ENCODE measurements at regions of chr2 and their contacts with region 1.

Region 1: GRCh38 chr2:46230115-46230571 is 67.1 kb upstream of the EPAS1 start:
- DNase-seq: peak; percentile 24
- ATAC-seq: peak; percentile 76
- H3K4me3 ChIP-seq: peak overlapping the region in 2 of 3 experiments; percentile 23 to 53; a peak in 4 of 6 replicates
- H3K27ac ChIP-seq: no peak overlapping the region
- H3K4me1 ChIP-seq: peaks cover 68% of the 10 kb centered on the region
- H3K27me3 ChIP-seq: peaks cover 0 to 6% of the 10 kb centered on the region in 2 experiments; a peak in 3 of 5 replicates
- CTCF ChIP-seq: peak; percentile 73
- EP300 ChIP-seq: no peak
- POLR2A ChIP-seq: no peak
- RAD21 ChIP-seq: peak; percentile 51

Region 2: GRCh38 chr2:45412754-45413379 is 817.3 kb before region 1 on chr2:
- CTCF ChIA-PET with region 1: no interaction called
- POLR2A ChIA-PET with region 1: no interaction called
- in situ Hi-C with region 1: no loop called
- intact Hi-C with region 1: no loop called
- DNase-seq: no peak
- ATAC-seq: no peak
- H3K4me3 ChIP-seq: no peak overlapping the region
- H3K27ac ChIP-seq: no peak overlapping the region
- H3K4me1 ChIP-seq: no peaks in the 10 kb centered on the region
- H3K27me3 ChIP-seq: no peaks in the 10 kb centered on the region
- CTCF ChIP-seq: no peak
- EP300 ChIP-seq: no peak
- POLR2A ChIP-seq: no peak
- RAD21 ChIP-seq: no peak

Region 3: GRCh38 chr2:46062637-46063412 is 167.3 kb before region 1 on chr2:
- CTCF ChIA-PET with region 1: no interaction called
- POLR2A ChIA-PET with region 1: interaction called, 4 read pairs
- in situ Hi-C with region 1: no loop called
- intact Hi-C with region 1: loop called (anchors 5 kb)
- DNase-seq: peak; percentile 80
- ATAC-seq: peak; percentile 91
- H3K4me3 ChIP-seq: no peak overlapping the region
- H3K27ac ChIP-seq: no peak overlapping the region
- H3K4me1 ChIP-seq: peaks cover 6% of the 10 kb centered on the region; the same call in 1 of the 2 replicates
- H3K27me3 ChIP-seq: no peaks in the 10 kb centered on the region
- CTCF ChIP-seq: peak; percentile 93
- EP300 ChIP-seq: no peak
- POLR2A ChIP-seq: no peak
- RAD21 ChIP-seq: peak; percentile 89

Region 4: DNA sequence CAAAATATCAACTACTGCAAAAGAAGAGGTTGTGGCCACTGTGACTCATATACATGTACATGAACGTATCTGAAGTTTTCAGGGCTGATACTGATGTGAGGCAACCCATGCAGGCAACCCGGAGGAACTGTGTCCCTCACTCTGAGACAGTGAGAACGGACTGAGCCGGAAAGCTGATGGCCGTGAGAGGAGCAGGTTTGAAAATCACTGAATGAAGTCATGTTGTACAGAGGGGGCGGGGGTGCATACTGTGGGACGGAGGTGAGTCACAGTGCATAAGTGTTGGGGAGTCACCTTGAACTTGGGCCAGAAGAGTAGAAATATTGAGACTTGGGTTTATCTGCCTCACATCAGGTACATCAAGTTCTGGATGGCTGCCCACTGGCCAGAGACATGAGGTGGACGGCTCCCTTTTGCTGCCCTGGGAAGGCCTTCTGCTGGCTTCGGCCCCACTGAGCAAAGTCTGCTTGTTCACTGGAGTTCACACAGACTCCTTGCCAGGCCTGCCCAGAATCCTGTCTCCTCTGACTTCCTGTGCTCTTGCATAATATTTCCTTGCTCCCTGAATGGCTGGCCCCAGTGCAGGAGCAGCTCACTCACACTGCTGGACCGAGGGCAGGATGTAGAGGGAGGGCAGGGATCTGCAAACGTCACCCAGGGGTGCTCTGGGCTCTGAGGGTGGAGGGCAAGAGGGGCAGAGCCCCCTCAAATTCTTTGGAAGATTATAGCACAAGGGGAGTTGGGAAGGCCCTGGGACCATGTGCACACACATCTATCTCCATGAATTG is 85.2 kb after region 1 on chr2:
- CTCF ChIA-PET with region 1: no interaction called
- POLR2A ChIA-PET with region 1: interaction called, 10 read pairs
- in situ Hi-C with region 1: no loop called
- intact Hi-C with region 1: no loop called
- DNase-seq: peak; percentile 97
- ATAC-seq: peak; percentile 90
- H3K4me3 ChIP-seq: peak overlapping the region in 2 of 3 experiments; percentile 12 to 47; a peak in 5 of 6 replicates
- H3K27ac ChIP-seq: peak overlapping the region; percentile 66
- H3K4me1 ChIP-seq: peaks cover 99% of the 10 kb centered on the region
- H3K27me3 ChIP-seq: no peaks in the 10 kb centered on the region
- CTCF ChIP-seq: peak; percentile 24
- EP300 ChIP-seq: peak in 1 of 2 experiments; percentile 83; a peak in 2 of 4 replicates
- POLR2A ChIP-seq: peak; percentile 61 to 72
- RAD21 ChIP-seq: peak; percentile 56; the same call in 1 of the 2 replicates

Measured in HepG2 (cell line).